AG04450 (cell line): ENCODE measurements at regions of chr7 and their contacts with region 1.

Region 1: GRCh38 chr7:139431010-139431409 is 52.5 kb downstream of the KLRG2 start:
- DNase-seq: no peak
- H3K4me3 ChIP-seq: no peak overlapping the region
- H3K27ac ChIP-seq: no peak overlapping the region
- H3K27me3 ChIP-seq: no peaks in the 10 kb centered on the region
- CTCF ChIP-seq: no peak

Region 2: DNA sequence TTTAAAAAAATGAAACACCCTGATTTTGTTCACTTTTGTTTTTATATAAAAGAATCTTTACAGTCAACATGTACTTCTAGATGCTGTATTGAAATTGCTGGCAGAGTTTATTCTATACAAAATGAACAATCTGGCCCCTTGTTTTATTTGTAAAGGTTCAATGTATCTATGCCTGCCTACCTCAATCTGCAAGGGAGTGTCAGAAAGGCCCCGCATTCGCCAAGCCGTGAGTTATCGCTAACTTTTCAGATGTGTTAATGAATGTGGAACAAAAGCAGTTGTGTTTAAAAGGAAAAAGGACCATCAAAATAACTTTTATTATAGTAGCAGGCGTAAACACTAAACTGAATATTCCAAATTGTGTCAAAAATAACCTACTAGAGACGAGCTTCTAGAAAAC is 56.8 kb before region 1 on chr7:
- CTCF ChIA-PET with region 1: interaction called, 16 read pairs
- POLR2A ChIA-PET with region 1: no interaction called
- DNase-seq: no peak
- H3K4me3 ChIP-seq: no peak overlapping the region
- H3K27ac ChIP-seq: no peak overlapping the region
- H3K27me3 ChIP-seq: no peaks in the 10 kb centered on the region
- CTCF ChIP-seq: no peak

Region 3: DNA sequence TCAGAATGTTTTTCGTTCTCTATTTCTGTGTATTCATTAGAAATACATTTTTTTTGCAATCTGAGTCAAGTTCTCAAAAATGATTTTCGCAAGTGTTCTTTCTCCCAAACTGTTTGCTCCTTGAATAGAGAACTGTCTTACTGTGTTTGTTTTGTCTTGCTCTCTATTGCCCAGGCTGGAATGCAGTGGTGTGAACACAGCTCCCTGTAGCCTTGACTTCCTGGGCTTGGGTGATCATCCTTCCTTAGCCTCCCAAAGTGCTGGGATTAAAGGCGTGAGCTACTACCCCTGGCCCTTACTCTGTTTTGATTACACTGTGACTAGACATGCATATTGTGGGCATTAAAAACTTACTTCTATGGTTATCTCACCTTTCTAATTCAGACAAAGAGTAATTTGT is 14.6 kb before region 1 on chr7:
- CTCF ChIA-PET with region 1: interaction called, 105 read pairs
- POLR2A ChIA-PET with region 1: no interaction called
- DNase-seq: no peak
- H3K4me3 ChIP-seq: no peak overlapping the region
- H3K27ac ChIP-seq: no peak overlapping the region
- H3K27me3 ChIP-seq: no peaks in the 10 kb centered on the region
- CTCF ChIP-seq: no peak

Region 4: DNA sequence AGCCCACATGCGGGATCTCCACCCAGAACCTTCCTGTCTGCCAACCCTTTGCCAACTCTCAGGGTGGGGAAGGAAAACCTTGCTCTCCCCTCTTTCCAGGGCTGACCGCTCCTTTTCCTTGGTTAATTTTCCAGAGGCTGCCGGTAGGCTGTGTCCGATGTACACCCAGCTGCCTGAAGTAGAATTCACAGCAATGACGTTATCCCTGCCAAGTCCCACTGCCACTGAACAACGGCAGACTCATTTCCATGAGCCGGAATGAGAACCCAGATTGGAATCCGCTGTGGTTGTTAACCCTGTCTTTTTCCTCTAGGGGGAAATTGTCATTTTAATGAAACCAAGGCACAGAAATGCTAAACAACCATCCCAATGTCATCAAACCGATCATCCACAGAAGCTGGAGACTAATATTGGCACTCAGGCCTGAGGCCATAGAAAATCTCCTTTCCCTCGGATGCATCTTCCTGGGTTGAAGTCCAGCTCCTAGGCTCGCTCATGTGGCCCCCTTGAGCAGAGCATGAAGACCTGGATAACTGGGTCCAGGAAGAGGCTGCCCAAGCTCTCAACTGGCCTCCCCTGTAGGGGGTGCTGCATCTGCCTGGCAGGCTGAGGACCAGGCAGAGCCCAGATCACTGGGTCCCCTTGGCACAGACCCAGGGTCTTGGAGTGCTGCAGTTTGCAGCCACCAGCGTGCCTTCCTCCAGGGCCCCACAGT is 22.1 kb after region 1 on chr7:
- CTCF ChIA-PET with region 1: interaction called, 43 read pairs
- POLR2A ChIA-PET with region 1: no interaction called
- DNase-seq: no peak
- H3K4me3 ChIP-seq: no peak overlapping the region
- H3K27ac ChIP-seq: no peak overlapping the region
- H3K27me3 ChIP-seq: no peaks in the 10 kb centered on the region
- CTCF ChIP-seq: 0 out of 2 replicates have a peak, but pooled peaks have one; percentile 8

Region 5: GRCh38 chr7:139620676-139621344 is 189.8 kb after region 1 on chr7:
- CTCF ChIA-PET with region 1: interaction called, 10 read pairs
- POLR2A ChIA-PET with region 1: no interaction called
- DNase-seq: no peak
- H3K4me3 ChIP-seq: no peak overlapping the region
- H3K27ac ChIP-seq: no peak overlapping the region
- H3K27me3 ChIP-seq: no peaks in the 10 kb centered on the region
- CTCF ChIP-seq: peak; percentile 65